Mammary epithelial cell (primary cell): ENCODE measurements at regions of chr10 and their contacts with region 1.

Region 1: DNA sequence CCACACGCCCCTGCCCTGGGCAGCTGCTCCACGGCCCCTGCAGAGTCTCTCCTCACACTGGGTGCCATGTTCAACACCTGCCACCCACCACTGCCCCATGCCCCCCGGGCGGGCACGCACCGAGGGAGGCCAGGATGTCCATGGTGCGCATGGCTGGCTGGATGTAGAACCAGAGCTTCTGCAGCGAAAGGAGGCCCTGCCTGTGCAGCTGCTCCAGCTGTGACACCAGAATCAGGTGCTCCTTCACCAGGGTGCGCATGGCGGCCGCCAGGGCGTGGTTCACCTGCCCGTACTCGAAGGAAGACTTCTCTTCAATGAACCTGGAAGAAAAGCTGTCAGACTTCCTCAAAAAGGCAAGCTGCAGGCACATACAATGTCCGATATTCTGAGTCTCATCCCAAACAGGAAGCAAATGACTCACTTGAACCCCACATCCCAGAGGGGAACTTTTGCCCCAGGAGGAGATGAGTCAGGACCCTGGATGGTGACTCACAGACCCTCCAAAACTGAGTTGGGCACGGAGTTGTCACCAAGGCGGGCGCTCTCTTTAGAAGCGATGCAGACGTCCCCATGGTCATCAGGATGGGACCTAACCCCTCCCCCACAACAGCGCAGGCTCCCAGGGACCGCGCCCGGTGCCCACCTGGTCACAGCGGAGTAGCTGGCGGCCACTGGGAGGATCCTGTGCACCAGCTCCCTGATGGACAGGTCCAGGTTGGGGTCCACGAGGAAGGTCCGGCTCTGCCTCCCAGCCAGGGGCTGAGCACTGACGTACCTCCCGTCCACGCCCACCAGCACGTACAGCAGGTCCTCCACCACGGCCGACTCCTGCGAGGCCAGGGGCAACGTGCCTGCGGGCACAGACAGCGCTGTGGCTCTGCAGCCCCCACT is 15.5 kb downstream of the TUBGCP2 start:
- DNase-seq: peak; percentile 79
- H3K4me3 ChIP-seq: no peak overlapping the region
- H3K27ac ChIP-seq: peak overlapping the region; percentile 16
- H3K4me1 ChIP-seq: peaks cover 19% of the 10 kb centered on the region
- H3K27me3 ChIP-seq: no peaks in the 10 kb centered on the region
- CTCF ChIP-seq: no peak

Region 2: DNA sequence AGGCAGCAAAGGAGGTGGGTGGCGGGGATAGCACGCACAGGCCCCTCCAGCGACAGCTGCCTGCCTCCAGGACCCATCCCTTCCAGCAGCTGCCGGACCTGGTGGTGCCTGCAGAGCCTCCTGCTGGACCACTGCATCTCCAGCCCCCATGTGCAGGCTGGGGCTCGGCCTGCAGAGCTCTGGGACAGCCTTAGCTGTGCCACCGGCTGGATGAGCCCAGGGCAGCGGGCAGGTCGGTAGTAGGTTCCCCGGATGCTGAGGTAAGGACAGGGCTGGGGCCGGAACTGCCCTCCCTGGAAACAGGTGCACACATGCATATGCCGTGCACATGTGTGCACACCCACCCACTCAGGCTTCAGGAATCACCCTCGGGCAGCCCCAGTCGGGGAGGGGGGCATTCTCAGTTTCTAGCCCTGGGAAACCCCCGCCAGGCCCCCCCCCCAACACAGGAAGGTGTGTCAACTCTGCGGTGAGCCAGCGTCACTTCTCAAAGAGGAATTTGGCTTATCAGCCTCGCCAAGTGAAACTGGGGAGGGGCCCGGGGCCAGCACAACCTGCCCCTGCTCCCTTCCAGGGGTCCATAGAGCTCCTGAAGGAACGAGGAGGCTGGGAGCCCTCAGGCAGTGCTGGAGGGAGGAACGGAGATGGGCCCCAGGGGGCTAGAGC is 18.3 kb before region 1 on chr10:
- CTCF ChIA-PET with region 1: no interaction called
- dilution Hi-C with region 1: no loop called
- in situ Hi-C with region 1: no loop called
- intact Hi-C with region 1: loop called (anchors 2 kb)
- DNase-seq: peak; percentile 87
- H3K4me3 ChIP-seq: peak overlapping the region in 1 of 3 experiments; percentile 13
- H3K27ac ChIP-seq: peak overlapping the region; percentile 69
- H3K4me1 ChIP-seq: peaks cover 61% of the 10 kb centered on the region
- H3K27me3 ChIP-seq: no peaks in the 10 kb centered on the region
- CTCF ChIP-seq: no peak